ENCODE measurements at regions of chr12 and their contacts with region 1.

Region 1: DNA sequence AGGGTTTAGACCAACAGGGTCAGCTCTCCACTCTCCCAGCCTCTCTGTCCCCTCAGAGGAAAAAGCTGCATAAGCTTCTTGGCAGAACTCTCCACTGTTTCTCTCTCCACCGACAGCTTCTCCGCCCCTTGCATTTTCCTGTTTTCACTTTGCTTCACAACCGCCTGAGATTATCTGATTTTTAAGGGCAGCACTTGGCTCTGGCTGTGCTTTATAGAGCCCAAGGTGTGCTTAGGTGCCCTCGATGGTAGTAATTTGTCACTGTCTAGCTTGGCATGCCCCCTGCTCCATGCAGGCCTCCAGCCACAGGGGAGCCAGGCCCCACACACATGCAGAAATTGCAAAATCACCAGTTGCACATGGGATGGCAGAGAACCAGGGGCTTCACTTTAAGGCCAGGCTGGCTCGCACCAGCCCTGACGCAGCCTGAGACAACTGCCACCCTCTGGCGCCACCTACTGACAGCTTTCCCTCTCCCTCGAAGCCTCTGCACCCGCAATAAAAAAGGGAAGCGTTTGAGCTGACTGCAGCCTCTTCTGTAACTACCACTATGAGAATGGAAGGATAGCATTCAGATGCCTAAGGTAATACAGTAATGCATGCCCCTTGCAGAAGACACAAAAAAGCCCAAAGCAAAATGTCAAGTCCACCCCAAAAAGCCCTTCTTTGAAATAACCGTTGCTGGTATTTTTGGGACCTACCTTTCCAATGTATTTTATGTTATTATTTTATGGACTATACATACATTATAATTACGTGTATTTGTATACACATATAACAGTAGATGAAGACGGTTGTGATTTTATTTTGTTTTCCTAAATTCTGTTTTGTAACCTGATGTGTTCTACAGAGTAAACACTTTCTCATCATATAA is 32.0 kb upstream of the RIMBP2 start:
- DNase-seq: peak; percentile 19 to 89
- H3K4me3 ChIP-seq: no peak overlapping the region
- H3K4me1 ChIP-seq: no peaks in the 10 kb centered on the region
- H3K27me3 ChIP-seq: no peaks in the 10 kb centered on the region; the same call in 1 of the 2 replicates

Region 2: DNA sequence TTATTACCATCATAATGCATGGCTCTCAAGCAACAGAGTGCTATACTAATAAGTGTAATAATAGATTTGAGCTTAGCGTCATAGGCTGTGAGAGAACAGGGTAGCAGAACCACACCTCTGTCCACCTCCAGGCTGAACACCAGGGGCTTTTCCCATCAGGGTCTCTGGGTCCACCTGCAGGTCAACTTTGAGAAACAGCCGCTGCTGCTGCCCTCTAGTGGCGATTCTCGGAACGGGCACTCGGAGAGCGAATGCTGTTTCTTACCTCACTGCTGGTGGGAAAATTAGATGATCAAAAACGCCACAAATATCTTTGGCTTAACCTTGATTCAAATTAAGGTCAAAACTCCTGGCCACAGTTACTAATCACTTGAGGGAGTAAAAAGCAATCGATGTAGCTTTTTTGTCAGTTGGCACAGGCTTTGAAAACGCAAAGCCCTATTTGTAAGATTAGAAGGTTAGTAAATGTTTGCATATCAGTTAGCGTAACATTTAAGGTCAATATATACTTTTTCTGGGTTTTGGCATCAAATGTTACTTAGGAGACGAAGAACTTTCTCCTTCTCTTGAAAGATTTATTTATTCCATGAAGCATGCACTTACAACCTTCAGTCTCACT is 716.4 kb before region 1 on chr12:
- in situ Hi-C with region 1: loop called (anchors 25 kb)
- DNase-seq: peak; percentile 36 to 83
- H3K4me3 ChIP-seq: no peak overlapping the region
- H3K4me1 ChIP-seq: no peaks in the 10 kb centered on the region
- H3K27me3 ChIP-seq: no peaks in the 10 kb centered on the region

Region 3: GRCh38 chr12:130639476-130640424 is 108.4 kb before region 1 on chr12:
- in situ Hi-C with region 1: no loop called
- DNase-seq: no peak
- H3K4me3 ChIP-seq: no peak overlapping the region
- H3K4me1 ChIP-seq: no peaks in the 10 kb centered on the region
- H3K27me3 ChIP-seq: no peaks in the 10 kb centered on the region